PC-9 (cell line): ENCODE measurements at regions of chr2 and their contacts with region 1.

Region 1: DNA sequence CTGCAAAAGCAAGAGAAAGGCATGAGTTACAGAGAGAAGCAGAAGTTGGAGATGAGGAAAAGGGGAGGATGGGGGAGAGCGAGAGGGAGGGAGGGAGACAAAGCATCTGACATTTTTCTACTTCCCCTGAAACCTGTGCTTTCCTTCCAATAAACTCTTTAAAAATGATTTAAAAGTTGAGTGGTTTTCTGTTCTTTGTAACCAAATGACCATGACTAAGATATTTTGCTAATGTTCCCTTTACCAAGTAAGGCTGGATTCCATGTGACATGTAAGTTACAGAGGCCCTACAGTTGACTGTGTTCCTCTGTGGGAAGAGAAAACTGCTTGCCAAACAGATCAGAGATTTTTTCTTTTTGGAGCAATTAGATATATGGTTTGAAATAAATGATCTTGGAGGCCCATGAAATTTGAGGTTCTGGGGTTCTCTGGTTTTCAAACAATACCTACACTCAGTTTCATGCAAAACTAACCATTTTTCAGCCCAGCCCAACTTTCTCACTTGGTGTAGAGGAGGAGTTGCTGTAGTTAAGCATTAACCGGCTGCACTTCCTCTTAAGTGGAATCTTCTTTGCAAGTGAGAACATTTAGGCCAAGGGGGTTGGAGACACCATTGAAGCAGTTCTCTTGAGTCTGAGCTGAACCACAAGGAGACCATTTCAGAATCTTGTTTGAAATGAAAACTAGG is 34.5 kb downstream of the INSIG2 start:
- DNase-seq: peak; percentile 26 to 74
- H3K4me3 ChIP-seq: peak overlapping the region; percentile 12; the same call in 1 of the 2 replicates
- H3K27ac ChIP-seq: peak overlapping the region; percentile 99
- H3K4me1 ChIP-seq: peaks cover 63% of the 10 kb centered on the region
- H3K27me3 ChIP-seq: no peaks in the 10 kb centered on the region
- CTCF ChIP-seq: no peak; the same call in 1 of the 2 replicates

Region 2: DNA sequence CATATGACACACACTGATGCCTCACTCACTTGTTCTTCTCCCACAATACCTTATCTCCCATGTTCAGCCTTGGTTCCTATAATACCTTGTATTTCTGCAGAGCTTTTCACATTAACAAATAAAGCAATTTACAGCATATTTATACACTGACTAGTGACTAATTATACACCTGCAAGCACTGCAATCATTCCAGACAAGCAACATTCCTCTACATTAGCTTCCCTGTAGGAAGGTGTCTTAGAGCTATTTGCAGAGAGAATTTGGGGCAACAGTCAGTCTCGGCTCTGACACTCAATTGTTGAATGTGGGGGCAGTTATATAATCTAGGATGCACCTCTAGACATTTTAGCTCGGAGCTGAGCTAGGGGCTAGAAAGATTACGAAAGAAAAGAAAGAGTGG is 44.0 kb before region 1 on chr2:
- CTCF ChIA-PET with region 1: interaction called, 4 read pairs
- POLR2A ChIA-PET with region 1: interaction called, 8 read pairs
- intact Hi-C with region 1: loop called (anchors 1 kb)
- DNase-seq: peak; percentile 46 to 100
- H3K4me3 ChIP-seq: peak overlapping the region; percentile 30; the same call in 1 of the 2 replicates
- H3K27ac ChIP-seq: peak overlapping the region; percentile 95
- H3K4me1 ChIP-seq: peaks cover 62% of the 10 kb centered on the region
- H3K27me3 ChIP-seq: no peaks in the 10 kb centered on the region
- CTCF ChIP-seq: no peak

Region 3: GRCh38 chr2:118088051-118089024 is 34.4 kb before region 1 on chr2 and contains the start of gene INSIG2:
- CTCF ChIA-PET with region 1: no interaction called
- POLR2A ChIA-PET with region 1: interaction called, 21 read pairs
- intact Hi-C with region 1: loop called (anchors 1 kb)
- DNase-seq: peak; percentile 99 to 100
- H3K4me3 ChIP-seq: peak within 1 kb of the TSS; percentile 79
- H3K27ac ChIP-seq: peak within 1 kb of the TSS; percentile 94
- H3K4me1 ChIP-seq: peaks cover 69% of the 10 kb centered on the region
- H3K27me3 ChIP-seq: no peaks in the 10 kb centered on the region
- CTCF ChIP-seq: peak; percentile 13; the same call in 1 of the 2 replicates
- total RNA-seq, gene INSIG2: 33.6 and 54.8 TPM in 2 replicates

Region 4: DNA sequence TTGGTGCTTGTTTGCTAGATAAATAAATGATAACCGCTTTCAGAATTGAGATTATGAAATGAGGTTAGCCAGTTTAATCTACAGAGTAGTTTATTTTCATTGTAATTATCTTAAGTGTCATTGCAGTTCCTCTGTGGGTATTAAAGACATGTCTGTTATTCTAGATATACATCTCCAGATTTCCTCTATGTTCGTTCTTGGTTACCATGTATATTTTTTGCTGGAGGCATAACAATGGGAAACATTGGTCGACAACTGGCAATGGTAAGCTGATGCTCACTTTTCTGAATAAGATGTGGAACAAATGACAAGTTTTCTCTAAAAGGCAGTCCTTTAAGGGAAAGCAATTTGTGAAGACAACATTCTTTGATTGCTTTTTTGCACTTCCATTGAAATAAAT is 15.8 kb before region 1 on chr2:
- CTCF ChIA-PET with region 1: no interaction called
- POLR2A ChIA-PET with region 1: no interaction called
- intact Hi-C with region 1: no loop called
- DNase-seq: peak in 1 of 2 experiments; percentile 32
- H3K4me3 ChIP-seq: no peak overlapping the region
- H3K27ac ChIP-seq: no peak overlapping the region
- H3K4me1 ChIP-seq: peaks cover 14% of the 10 kb centered on the region
- H3K27me3 ChIP-seq: no peaks in the 10 kb centered on the region
- CTCF ChIP-seq: no peak

Region 5: DNA sequence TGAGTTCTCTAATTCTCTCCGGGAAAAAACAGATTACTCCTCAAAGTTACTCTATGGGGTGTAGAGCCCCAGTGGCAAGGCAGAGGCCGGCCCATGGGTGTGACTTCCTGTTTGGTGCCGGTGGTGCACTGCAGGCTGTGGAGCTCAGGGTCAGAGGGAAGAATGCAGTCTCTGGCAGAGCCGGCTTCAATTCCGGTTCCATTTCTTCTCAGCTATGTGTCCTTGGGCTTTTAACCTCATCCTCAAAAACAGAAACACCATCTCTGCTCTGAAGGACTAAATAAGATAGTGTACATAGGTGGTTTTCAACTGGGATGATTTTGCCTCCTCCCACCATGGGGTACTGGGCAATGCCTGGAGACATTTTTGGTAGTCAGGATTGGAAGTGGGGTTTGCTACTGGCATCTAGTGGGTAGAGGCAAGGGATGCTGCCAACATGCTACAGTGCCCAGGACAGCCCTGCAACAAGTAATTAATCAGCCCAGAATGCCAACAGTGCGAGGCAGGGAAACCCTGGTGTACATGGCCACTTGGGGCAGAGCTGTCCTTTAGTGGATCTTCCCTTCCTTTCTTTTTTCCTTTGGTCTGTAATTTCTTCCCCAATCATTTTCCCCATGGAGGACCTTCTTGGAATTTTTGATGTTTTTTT is 46.7 kb after region 1 on chr2:
- CTCF ChIA-PET with region 1: interaction called, 3 read pairs
- POLR2A ChIA-PET with region 1: no interaction called
- intact Hi-C with region 1: loop called (anchors 1 kb)
- DNase-seq: peak; percentile 43 to 51
- H3K4me3 ChIP-seq: no peak overlapping the region
- H3K27ac ChIP-seq: no peak overlapping the region
- H3K4me1 ChIP-seq: peaks cover 15% of the 10 kb centered on the region
- H3K27me3 ChIP-seq: no peaks in the 10 kb centered on the region
- CTCF ChIP-seq: no peak

Region 6: DNA sequence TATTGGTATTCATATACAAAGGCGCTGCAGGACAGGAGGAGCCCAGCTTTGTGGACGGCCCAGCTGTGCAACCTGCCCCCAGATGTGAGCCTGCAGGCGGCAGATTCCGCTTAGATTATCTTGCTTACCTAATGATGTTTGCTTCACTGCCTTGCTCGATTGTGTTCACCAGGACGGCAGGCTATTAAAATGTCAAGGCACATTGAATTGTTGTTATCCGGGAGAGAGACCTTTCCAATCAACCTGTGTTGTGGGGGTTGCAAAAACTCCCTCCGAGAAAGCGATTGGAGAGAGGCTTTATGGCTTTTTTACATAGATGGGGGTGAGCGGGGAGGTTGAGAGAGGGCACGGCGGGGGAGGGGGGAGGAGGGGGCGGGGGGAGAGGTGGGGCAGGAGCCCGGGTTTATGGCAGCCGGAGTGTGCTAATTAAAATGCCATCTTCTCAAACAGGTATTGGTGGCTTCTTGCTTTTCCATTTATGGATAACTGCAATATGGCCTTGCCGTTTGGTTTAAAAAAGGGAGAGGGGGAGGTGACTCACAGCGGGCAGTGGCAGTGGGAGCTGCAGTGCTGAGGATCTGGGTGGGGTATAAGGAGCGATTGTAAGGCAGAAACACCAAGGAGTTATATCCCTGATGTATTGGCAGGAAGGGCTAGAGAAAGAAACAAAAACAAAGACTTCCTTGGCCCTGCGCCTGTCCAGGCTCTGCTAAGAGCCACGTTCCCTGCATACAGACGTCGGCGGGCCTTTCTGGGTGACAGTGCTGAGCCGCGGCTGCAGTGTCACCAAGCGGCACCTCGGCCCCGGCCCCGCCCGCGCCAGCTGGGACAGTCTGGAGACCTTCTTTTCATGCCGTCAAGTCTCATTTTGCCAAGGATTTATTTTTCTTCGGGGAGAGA is 62.7 kb after region 1 on chr2:
- CTCF ChIA-PET with region 1: no interaction called
- POLR2A ChIA-PET with region 1: interaction called, 3 read pairs
- intact Hi-C with region 1: loop called (anchors 1 kb)
- DNase-seq: peak; percentile 57 to 67
- H3K4me3 ChIP-seq: peak overlapping the region; percentile 75
- H3K27ac ChIP-seq: peak overlapping the region; percentile 92
- H3K4me1 ChIP-seq: peaks cover 23% of the 10 kb centered on the region
- H3K27me3 ChIP-seq: no peaks in the 10 kb centered on the region
- CTCF ChIP-seq: no peak; the same call in 1 of the 2 replicates